ENCODE measurements at regions of chr12 and their contacts with region 1.

Region 1: GRCh38 chr12:58249610-58250009 is 308.2 kb downstream of the ATP23 start:
- DNase-seq: peak in 3 of 5 donors; percentile 31 to 40 (median 34)
- ATAC-seq: peak in 2 of 4 donors; percentile 22 to 82
- H3K4me3 ChIP-seq: no peak overlapping the region
- H3K27ac ChIP-seq: peak overlapping the region in 1 of 12 donors; percentile 20
- H3K4me1 ChIP-seq: peaks cover 0 to 16% (median 10%) of the 10 kb centered on the region in 12 donors
- H3K27me3 ChIP-seq: no peaks in the 10 kb centered on the region
- CTCF ChIP-seq: no peak
- POLR2A ChIP-seq: no peak

Region 2: GRCh38 chr12:58139894-58140293 is 109.7 kb before region 1 on chr12:
- intact Hi-C with region 1: loop called in 1 of 10 experiments (anchors 5 kb)
- DNase-seq: no peak
- ATAC-seq: no peak
- H3K4me3 ChIP-seq: no peak overlapping the region
- H3K27ac ChIP-seq: no peak overlapping the region
- H3K4me1 ChIP-seq: no peaks in the 10 kb centered on the region
- H3K27me3 ChIP-seq: no peaks in the 10 kb centered on the region
- CTCF ChIP-seq: no peak
- POLR2A ChIP-seq: no peak

Region 3: DNA sequence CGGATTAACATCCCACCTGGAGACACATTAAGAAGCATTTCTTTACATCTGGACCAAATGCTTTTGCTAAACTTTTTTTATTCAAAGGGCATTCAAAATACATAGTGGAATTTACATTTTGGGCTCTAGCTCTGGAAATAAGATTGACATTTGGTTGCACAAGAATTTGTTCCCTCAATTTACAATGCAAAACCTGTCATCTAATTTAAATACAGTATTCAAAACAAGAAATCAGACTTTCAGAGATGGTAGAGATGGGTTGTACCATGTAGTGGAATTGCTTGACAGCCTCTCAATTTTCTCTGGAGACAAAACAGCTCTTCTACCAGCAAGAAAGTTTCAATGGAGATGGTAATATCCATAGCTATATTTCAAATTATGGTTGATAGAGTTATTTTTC is 32.5 kb before region 1 on chr12:
- intact Hi-C with region 1: no loop called
- DNase-seq: no peak
- ATAC-seq: no peak
- H3K4me3 ChIP-seq: no peak overlapping the region
- H3K27ac ChIP-seq: no peak overlapping the region
- H3K4me1 ChIP-seq: no peaks in the 10 kb centered on the region
- H3K27me3 ChIP-seq: no peaks in the 10 kb centered on the region
- CTCF ChIP-seq: no peak
- POLR2A ChIP-seq: no peak